Activated B cell treated with CpG ODN at 0.5 μM for 24 hours (primary cell): ENCODE measurements at regions of chr13 and their contacts with region 1.

Region 1: GRCh38 chr13:72727417-72728289 is at the starts of genes BORA and MZT1:
- DNase-seq: peak; percentile 92
- ATAC-seq: peak; percentile 93
- H3K4me3 Mint-ChIP-seq: peak within 1 kb of the TSS; percentile 95
- H3K27ac Mint-ChIP-seq: peak within 1 kb of the TSS; percentile 84
- H3K4me1 Mint-ChIP-seq: peaks cover 48% of the 10 kb centered on the region
- H3K27me3 Mint-ChIP-seq: no peaks in the 10 kb centered on the region
- CTCF ChIP-seq: no peak
- total RNA-seq, gene BORA: 10.3 and 11.9 TPM in 2 replicates
- total RNA-seq, gene MZT1: 6.5 and 6.9 TPM in 2 replicates

Region 2: DNA sequence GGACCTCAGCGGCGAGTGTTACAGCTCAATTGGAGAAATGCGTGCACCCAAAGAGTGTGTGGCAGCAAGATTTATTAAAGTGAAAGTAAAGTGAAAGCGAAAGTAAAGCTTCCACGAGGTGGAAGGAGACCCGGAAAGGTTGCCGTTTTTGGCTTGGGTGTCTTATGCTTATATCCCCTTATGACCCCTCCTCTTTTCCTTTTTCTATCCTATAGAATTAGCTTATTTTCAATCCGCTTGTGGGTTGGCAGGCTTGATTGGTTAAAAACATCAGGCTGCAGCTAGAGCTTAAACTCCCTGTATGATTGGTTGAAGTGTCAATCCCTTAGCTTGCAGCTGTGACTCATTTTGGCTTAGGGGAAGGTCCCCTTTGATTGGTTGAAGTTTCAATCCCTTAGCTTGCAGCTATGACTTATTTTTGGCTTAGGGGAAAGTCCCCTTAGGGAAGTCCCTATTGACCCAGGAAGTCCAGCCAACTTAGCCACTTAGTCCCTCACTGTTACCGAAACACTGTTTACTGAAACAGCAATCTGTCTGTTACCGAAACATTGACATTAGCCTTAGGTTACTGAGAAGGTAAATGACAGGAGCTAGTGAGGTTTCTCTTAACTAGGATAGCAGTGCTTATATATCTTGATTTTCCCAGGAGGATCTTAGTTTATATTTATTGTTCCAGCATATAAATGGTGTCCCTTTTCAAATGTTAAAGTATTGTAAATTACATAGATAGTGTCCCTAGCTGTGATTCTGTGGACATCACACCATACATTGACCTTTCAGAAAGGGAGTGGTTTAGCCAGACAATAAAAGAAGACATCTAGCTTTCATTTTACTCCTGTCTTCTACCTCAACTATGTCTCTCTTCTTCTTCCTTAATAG is 1436.5 kb before region 1 on chr13:
- CTCF ChIA-PET with region 1: no interaction called
- POLR2A ChIA-PET with region 1: no interaction called
- intact Hi-C with region 1: loop called (anchors 10 kb)
- DNase-seq: no peak
- ATAC-seq: peak; percentile 71
- H3K4me3 Mint-ChIP-seq: peak overlapping the region; percentile 87
- H3K27ac Mint-ChIP-seq: peak overlapping the region; percentile 85
- H3K4me1 Mint-ChIP-seq: peaks cover 18% of the 10 kb centered on the region
- H3K27me3 Mint-ChIP-seq: no peaks in the 10 kb centered on the region
- CTCF ChIP-seq: no peak

Region 3: GRCh38 chr13:71879129-71879535 is 848.5 kb before region 1 on chr13:
- CTCF ChIA-PET with region 1: no interaction called
- POLR2A ChIA-PET with region 1: no interaction called
- intact Hi-C with region 1: loop called (anchors 5 kb)
- DNase-seq: no peak
- ATAC-seq: no peak
- H3K4me3 Mint-ChIP-seq: no peak overlapping the region
- H3K27ac Mint-ChIP-seq: no peak overlapping the region
- H3K4me1 Mint-ChIP-seq: no peaks in the 10 kb centered on the region
- H3K27me3 Mint-ChIP-seq: no peaks in the 10 kb centered on the region
- CTCF ChIP-seq: no peak

Region 4: DNA sequence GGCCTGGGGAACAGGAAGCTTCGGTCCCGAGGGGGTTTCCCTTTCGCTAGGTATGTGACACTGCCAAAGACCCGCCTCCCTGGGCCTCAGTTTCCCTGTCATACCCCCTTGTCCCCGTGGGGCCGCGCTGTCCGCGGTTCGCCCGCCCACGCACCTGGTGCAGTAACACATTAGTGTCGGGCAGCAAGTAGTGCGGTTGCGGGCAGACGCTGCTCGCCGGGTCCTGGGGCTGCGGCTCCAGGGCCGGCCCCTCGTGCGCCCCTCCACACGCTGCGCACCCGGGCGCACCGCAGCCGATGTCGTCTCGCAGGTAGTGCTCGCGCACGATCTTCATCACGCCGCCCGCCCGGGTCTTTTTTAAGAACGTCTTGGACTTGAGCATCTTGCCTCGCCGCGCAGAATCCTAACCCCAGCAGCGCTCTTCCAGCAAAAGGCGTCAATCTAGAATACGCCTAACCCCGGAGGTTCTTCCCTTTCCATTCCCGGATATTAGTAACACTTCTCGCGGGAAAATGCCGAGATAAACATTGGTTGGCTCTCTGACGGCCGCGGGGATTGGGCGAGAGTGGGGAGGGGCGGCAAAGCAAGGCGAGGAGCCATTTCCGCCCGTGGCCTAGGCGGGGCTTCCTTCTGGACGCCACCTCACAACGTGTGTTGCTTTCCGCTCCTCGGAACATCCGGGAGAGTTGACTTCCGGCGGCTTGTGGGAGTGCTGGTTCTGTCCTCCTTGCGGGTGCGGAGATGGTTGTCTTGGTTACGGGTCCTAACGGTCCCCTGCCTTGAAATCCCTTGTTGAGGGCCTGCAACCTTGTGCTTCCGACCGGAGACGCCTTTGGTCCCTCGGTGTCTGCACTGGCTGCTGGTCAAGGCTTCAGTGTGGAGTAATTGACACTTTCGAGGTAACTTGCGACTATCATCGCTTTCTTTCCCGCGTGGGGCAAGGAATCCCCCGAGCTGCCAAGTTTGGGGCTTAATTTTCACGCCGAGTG is 54.1 kb after region 1 on chr13 and contains the starts of genes DIS3 and PIBF1:
- CTCF ChIA-PET with region 1: no interaction called
- POLR2A ChIA-PET with region 1: interaction called, 4 read pairs
- intact Hi-C with region 1: loop called (anchors 1 kb)
- DNase-seq: peak; percentile 87
- ATAC-seq: peak; percentile 98
- H3K4me3 Mint-ChIP-seq: peak within 1 kb of the TSS; percentile 99
- H3K27ac Mint-ChIP-seq: peak within 1 kb of the TSS; percentile 98
- H3K4me1 Mint-ChIP-seq: peaks cover 50% of the 10 kb centered on the region
- H3K27me3 Mint-ChIP-seq: no peaks in the 10 kb centered on the region
- CTCF ChIP-seq: no peak
- total RNA-seq, gene DIS3: 43.2 and 45.2 TPM in 2 replicates
- total RNA-seq, gene PIBF1: 25.8 and 32.7 TPM in 2 replicates

Region 5: DNA sequence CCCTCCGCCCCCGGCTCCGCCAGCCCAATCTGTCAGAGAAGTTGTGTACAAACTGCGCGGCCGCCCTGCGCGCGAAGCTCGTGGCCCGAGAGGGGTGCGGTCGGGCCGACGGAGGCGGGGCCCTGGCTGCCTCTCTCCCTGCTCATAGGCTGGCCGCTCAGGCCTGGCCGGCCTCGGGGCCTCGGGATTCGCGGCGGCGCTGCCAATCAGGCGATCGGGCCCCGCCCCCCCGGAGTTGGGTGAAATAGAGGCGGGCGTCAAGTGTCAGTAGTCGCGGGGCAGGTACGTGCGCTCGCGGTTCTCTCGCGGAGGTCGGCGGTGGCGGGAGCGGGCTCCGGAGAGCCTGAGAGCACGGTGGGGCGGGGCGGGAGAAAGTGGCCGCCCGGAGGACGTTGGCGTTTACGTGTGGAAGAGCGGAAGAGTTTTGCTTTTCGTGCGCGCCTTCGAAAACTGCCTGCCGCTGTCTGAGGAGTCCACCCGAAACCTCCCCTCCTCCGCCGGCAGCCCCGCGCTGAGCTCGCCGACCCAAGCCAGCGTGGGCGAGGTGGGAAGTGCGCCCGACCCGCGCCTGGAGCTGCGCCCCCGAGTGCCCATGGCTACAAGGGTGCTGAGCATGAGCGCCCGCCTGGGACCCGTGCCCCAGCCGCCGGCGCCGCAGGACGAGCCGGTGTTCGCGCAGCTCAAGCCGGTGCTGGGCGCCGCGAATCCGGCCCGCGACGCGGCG is 331.2 kb after region 1 on chr13 and contains the start of gene KLF5:
- CTCF ChIA-PET with region 1: no interaction called
- POLR2A ChIA-PET with region 1: interaction called, 4 read pairs
- intact Hi-C with region 1: loop called (anchors 1 kb)
- DNase-seq: peak; percentile 93
- ATAC-seq: peak; percentile 99
- H3K4me3 Mint-ChIP-seq: peak within 1 kb of the TSS; percentile 91
- H3K27ac Mint-ChIP-seq: peak within 1 kb of the TSS; percentile 54
- H3K4me1 Mint-ChIP-seq: peaks cover 18% of the 10 kb centered on the region
- H3K27me3 Mint-ChIP-seq: peaks cover 38% of the 10 kb centered on the region
- CTCF ChIP-seq: no peak
- total RNA-seq, gene KLF5: 0.35 and 0.69 TPM in 2 replicates